ENCODE measurements at regions of chr1 and their contacts with region 1.

Region 1: DNA sequence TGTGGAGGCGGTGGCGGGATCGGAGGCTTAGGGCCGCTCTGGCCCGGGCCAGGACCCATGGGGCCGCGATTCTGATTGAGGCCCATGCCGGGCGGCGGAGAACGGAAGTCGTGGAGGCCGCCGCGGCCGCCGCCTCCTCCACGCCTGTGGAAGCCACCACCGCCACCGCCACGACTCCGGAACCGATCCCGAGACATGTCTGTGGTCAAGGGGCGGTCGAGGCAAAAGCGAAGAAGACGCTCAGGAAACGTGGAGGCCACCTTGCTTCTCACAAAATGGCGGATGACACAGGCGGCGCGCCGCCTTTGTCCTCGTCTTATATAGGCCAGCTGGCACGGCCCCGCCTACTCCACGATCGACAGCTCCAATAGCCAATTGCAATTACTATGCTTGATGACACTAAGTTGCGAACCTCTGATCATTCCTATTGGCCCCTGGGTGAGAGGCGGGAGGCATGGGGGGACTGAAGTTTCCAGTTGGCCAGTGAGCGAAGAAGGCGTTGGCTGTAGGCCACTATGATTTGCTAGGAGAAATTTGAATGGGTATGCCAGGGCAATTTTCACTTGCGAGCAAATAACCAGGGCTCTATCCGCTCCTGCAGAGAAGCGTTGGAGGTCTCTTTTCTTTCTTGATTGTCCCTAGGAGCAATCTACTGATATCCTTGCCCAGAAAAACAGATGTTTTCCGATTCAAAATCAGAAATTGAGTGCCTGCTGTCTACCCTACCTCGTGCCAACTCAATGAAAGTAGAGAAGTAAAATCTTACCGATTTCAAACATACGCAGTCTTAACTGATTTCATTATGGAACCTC is at the start of gene SFPQ:
- DNase-seq: peak; percentile 94 to 99 (median 98)
- ATAC-seq: peak; percentile 94
- H3K4me3 ChIP-seq: peak within 1 kb of the TSS; percentile 72
- H3K4me3 Mint-ChIP-seq: peak within 1 kb of the TSS; percentile 92 to 98 (median 96)
- H3K27ac ChIP-seq: peak within 1 kb of the TSS; percentile 99
- H3K27ac Mint-ChIP-seq: peak within 1 kb of the TSS; percentile 92 to 99 (median 98)
- H3K4me1 ChIP-seq: peaks cover 31 to 32% of the 10 kb centered on the region in 2 donors
- H3K4me1 Mint-ChIP-seq: peaks cover 34 to 52% (median 47%) of the 10 kb centered on the region in 7 donors
- H3K27me3 ChIP-seq: no peaks in the 10 kb centered on the region
- H3K27me3 Mint-ChIP-seq: peaks cover 0 to 5% (median 0%) of the 10 kb centered on the region in 5 donors
- total RNA-seq, gene SFPQ: 316 to 610 (median 356) TPM

Region 2: GRCh38 chr1:34549199-34549598 is 643.9 kb before region 1 on chr1:
- CTCF ChIA-PET with region 1: no interaction called
- POLR2A ChIA-PET with region 1: no interaction called
- intact Hi-C with region 1: no loop called
- DNase-seq: no peak
- ATAC-seq: no peak
- H3K4me3 ChIP-seq: no peak overlapping the region
- H3K4me3 Mint-ChIP-seq: no peak overlapping the region
- H3K27ac ChIP-seq: no peak overlapping the region
- H3K27ac Mint-ChIP-seq: no peak overlapping the region
- H3K4me1 ChIP-seq: no peaks in the 10 kb centered on the region
- H3K4me1 Mint-ChIP-seq: no peaks in the 10 kb centered on the region
- H3K27me3 ChIP-seq: peaks cover 0 to 3% of the 10 kb centered on the region in 2 donors
- H3K27me3 Mint-ChIP-seq: peaks cover 6 to 53% (median 33%) of the 10 kb centered on the region in 5 donors

Region 3: DNA sequence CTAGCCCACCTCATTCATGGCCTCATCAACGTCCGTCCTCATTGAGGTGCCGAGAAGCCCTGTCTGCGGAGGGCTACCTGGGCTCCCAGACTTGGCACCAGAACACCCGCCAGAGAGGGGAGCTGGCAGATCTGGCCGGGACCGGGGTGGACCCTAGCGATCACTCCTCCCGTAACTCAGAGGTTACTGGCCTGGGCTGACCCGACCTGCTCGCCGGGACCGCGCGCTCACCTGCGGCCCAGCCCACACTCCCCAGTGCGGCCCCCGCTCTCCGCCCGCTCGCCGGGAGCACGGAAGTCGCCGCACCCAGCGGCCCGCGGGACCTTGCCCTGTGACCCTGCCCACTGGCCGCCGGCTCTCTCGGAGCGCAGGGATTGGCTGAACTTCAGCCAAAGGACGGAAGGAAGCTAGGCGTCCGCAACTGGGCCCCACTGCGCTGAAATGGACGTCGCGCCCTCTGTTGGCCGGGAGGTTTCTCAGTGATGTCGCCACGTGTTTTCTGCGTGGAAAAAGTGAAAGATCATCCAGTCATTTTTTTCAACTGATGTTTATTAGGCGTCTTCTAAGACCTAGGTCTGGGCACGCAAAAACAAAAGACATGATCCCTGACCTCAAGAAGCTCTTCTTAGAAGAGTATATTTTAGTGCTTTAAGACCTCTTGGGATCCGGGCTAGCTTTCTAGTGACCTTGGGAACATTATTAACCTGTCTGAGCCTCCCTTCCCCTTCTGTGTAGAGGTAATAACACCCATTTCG is 333.4 kb before region 1 on chr1 and contains the start of gene SMIM12:
- CTCF ChIA-PET with region 1: interaction called, 3 read pairs
- POLR2A ChIA-PET with region 1: no interaction called
- intact Hi-C with region 1: loop called (anchors 2 kb)
- DNase-seq: peak; percentile 69 to 92 (median 75)
- ATAC-seq: peak; percentile 99
- H3K4me3 ChIP-seq: peak within 1 kb of the TSS; percentile 72
- H3K4me3 Mint-ChIP-seq: peak within 1 kb of the TSS; percentile 85 to 100 (median 95)
- H3K27ac ChIP-seq: peak within 1 kb of the TSS; percentile 93
- H3K27ac Mint-ChIP-seq: peak within 1 kb of the TSS; percentile 90 to 99 (median 96)
- H3K4me1 ChIP-seq: peaks cover 38 to 43% of the 10 kb centered on the region in 2 donors
- H3K4me1 Mint-ChIP-seq: peaks cover 39 to 66% (median 63%) of the 10 kb centered on the region in 7 donors
- H3K27me3 ChIP-seq: no peaks in the 10 kb centered on the region
- H3K27me3 Mint-ChIP-seq: no peaks in the 10 kb centered on the region
- total RNA-seq, gene SMIM12: 29.1 to 46.4 (median 38.2) TPM

Region 4: DNA sequence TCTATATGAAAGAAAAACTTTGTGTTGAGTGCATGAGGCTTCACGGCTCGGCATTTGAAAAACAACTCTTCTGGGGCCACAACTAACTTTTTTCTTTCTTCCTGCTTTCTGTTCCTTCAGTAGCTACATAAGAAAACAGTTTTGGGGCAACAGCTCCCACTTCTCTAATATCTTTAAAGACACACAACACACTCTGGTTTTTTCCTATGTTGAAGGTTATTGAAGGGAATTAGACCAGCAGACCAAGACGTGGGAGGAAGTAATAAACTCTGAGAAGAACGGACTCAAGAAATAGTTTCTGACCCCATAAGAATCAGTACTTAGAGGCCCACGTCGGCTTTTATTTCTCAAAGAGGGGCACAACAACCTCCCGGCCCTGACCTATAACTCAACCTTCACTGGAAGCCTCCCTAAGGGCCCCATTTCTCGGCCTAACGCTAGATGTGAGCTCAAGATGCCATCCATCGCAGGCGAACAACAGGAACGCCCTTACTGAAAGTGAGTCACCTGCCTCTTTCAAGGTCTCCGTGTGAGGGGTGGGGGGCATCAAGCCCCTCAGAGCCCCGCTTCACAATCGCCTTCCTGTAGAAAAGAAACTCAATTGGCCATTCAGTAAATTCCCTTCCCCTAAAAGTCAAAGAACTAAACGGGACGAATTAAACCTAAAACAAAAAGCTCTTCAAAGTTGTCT is 162.2 kb before region 1 on chr1:
- CTCF ChIA-PET with region 1: no interaction called
- POLR2A ChIA-PET with region 1: interaction called, 7 read pairs
- intact Hi-C with region 1: loop called (anchors 1 kb)
- DNase-seq: peak in 5 of 9 donors; percentile 4 to 42 (median 7)
- ATAC-seq: peak; percentile 36
- H3K4me3 ChIP-seq: peak overlapping the region; percentile 100
- H3K4me3 Mint-ChIP-seq: peak overlapping the region; percentile 87 to 100 (median 98)
- H3K27ac ChIP-seq: peak overlapping the region; percentile 82
- H3K27ac Mint-ChIP-seq: peak overlapping the region; percentile 92 to 99 (median 97)
- H3K4me1 ChIP-seq: peaks cover 15 to 17% of the 10 kb centered on the region in 2 donors
- H3K4me1 Mint-ChIP-seq: peaks cover 24 to 53% (median 43%) of the 10 kb centered on the region in 7 donors
- H3K27me3 ChIP-seq: no peaks in the 10 kb centered on the region
- H3K27me3 Mint-ChIP-seq: peaks cover 0 to 2% (median 0%) of the 10 kb centered on the region in 5 donors

Region 5: DNA sequence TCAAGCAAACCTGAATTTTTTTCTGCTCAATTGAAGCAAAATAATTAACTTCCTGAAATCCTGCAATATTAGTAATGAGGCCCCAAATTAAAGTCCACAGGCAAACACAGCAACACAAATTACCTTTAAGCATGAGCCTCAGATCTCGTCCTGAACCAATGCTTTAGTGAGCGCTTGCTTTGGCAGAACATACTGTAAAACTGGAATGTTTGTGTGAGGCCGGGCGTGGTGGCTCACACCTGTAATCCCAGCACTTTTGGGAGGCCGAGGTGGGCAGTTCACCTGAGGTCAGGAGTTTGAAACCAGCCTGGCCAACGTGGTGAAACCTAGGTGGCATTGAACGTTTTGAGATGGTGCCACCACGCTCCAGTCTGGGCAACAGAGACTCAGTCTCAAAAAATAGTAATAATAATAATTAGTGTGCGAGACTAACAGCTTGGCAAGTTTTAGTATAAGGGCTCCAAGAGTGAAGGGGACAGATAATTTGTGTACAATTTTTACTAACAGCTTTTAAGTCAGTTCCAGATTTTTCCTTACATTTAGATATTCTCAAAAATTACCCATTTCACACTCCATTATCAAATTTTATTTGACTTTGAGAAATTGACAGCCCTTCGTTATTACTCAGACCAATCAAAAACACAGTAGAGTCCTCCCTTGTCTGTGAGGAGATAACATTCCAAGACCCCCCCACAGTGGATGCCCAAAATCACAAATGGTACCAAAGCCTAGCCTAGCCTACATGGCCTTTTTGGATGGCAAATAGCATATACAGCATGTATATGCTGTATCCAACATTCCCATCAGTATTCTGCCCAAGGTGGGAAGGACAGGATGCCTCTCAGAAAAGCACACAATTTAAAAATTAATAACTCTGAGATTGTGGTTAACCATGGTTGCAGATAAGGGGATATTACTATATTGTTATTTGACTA is 17.7 kb before region 1 on chr1:
- CTCF ChIA-PET with region 1: no interaction called
- POLR2A ChIA-PET with region 1: interaction called, 7 read pairs
- intact Hi-C with region 1: loop called in 1 of 2 experiments (anchors 1 kb)
- DNase-seq: no peak
- ATAC-seq: no peak
- H3K4me3 ChIP-seq: no peak overlapping the region
- H3K4me3 Mint-ChIP-seq: no peak overlapping the region
- H3K27ac ChIP-seq: no peak overlapping the region
- H3K27ac Mint-ChIP-seq: peak overlapping the region in 2 of 9 donors; percentile 31 to 74
- H3K4me1 ChIP-seq: peaks cover 6 to 10% of the 10 kb centered on the region in 2 donors
- H3K4me1 Mint-ChIP-seq: peaks cover 6 to 30% (median 24%) of the 10 kb centered on the region in 7 donors
- H3K27me3 ChIP-seq: no peaks in the 10 kb centered on the region
- H3K27me3 Mint-ChIP-seq: no peaks in the 10 kb centered on the region

Region 6: DNA sequence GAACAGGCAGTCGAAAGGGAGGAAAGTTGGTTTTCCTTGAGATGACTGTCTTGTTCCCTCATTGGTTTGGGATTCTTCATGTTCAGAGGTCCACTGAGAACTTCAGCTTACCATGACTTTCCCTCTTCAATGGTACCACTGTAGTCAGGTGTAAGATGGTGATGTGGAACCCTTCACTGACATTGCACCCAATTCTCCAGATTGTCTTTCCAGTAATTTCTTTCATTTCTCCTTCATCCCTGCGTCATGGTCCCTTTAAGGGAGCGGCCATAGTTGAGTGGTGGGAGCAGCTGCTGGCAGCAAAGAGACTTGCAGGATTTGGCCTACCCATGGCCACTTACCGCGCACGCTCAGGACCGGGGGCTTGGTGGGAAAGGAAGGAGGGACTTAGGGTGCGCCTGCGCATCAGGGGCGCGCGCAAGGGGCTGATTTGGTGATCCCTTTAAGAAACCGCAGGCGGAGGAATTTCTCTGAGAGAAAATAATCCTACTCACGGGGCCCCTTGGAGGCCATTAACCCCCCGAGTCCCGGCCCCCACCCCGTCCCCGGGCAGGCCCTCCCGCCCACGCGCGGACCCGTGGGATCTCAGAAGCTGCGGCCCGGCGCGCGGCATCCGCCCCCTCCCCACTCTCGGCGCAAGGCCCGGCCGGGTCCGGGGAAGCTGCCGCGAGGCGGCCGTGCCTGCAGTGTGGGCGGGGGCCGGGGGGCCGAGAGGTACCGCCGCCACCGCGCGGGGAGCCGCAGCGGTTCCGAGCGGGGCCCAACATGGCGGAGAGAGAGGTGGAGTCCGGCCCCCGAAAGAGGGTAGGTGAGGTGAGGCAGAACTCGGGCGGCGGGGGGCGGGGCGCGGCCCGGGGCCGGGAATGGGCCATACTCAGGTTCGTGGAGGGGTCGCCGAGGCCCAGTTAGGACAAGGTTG is 75.5 kb after region 1 on chr1 and contains the start of gene ZMYM4:
- CTCF ChIA-PET with region 1: no interaction called
- POLR2A ChIA-PET with region 1: interaction called, 5 read pairs
- intact Hi-C with region 1: loop called (anchors 1 kb)
- DNase-seq: peak; percentile 67 to 91 (median 87)
- ATAC-seq: peak; percentile 96
- H3K4me3 ChIP-seq: peak within 1 kb of the TSS; percentile 58
- H3K4me3 Mint-ChIP-seq: peak within 1 kb of the TSS; percentile 78 to 98 (median 90)
- H3K27ac ChIP-seq: peak within 1 kb of the TSS; percentile 88
- H3K27ac Mint-ChIP-seq: peak within 1 kb of the TSS; percentile 80 to 99 (median 93)
- H3K4me1 ChIP-seq: peaks cover 6 to 20% of the 10 kb centered on the region in 2 donors
- H3K4me1 Mint-ChIP-seq: peaks cover 22 to 44% (median 40%) of the 10 kb centered on the region in 7 donors
- H3K27me3 ChIP-seq: no peaks in the 10 kb centered on the region
- H3K27me3 Mint-ChIP-seq: peaks cover 0 to 5% (median 0%) of the 10 kb centered on the region in 5 donors
- total RNA-seq, gene ZMYM4: 32.1 to 52.9 (median 45.6) TPM

Region 7: DNA sequence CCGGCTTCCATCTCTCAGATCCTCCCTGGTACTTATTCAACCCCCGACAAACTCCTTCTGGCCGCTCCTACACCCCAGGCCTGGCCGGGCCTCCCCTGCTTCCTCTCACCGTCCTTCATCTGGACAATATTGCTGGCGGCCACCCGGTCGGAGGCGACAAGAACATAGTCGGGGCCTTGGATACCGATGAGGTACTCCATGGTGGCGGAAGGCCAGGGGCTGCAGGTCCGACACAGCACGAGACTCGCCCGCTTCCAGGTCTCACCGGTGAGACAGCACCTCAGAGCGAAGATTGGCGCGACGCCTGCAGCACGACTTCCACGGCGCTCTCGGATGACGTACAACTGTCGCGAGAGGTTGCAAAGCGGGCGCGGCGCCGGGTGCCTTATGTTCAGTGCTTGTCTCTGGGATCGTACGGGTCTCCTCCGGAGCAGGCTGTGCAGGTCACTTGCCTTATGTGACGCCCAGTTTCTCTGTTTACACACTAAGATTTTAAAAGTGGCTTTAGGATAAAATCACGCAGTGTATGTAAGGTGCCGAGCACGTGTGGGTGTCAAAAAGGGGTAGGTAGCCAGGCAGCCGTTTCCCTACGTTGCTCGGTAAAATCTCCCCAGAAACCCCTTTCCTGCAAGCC is 448.3 kb after region 1 on chr1 and contains the start of gene PSMB2:
- CTCF ChIA-PET with region 1: no interaction called
- POLR2A ChIA-PET with region 1: no interaction called
- intact Hi-C with region 1: loop called in 1 of 2 experiments (anchors 5 kb)
- DNase-seq: peak; percentile 89 to 96 (median 95)
- ATAC-seq: peak; percentile 97
- H3K4me3 ChIP-seq: peak within 1 kb of the TSS; percentile 89
- H3K4me3 Mint-ChIP-seq: peak within 1 kb of the TSS; percentile 97 to 100 (median 100)
- H3K27ac ChIP-seq: peak within 1 kb of the TSS; percentile 92
- H3K27ac Mint-ChIP-seq: peak within 1 kb of the TSS; percentile 98 to 100 (median 99)
- H3K4me1 ChIP-seq: peaks cover 18 to 19% of the 10 kb centered on the region in 2 donors
- H3K4me1 Mint-ChIP-seq: peaks cover 16 to 54% (median 42%) of the 10 kb centered on the region in 7 donors
- H3K27me3 ChIP-seq: no peaks in the 10 kb centered on the region
- H3K27me3 Mint-ChIP-seq: peaks cover 12 to 44% (median 30%) of the 10 kb centered on the region in 5 donors
- total RNA-seq, gene PSMB2: 20.4 to 93.5 (median 23.5) TPM

Region 8: GRCh38 chr1:35769759-35770446 is 576.8 kb after region 1 on chr1 and contains the start of gene CLSPN:
- CTCF ChIA-PET with region 1: no interaction called
- POLR2A ChIA-PET with region 1: interaction called, 3 read pairs
- intact Hi-C with region 1: loop called (anchors 1 to 2 kb)
- DNase-seq: peak; percentile 75 to 95 (median 88)
- ATAC-seq: peak; percentile 97
- H3K4me3 ChIP-seq: peak within 1 kb of the TSS; percentile 87
- H3K4me3 Mint-ChIP-seq: peak within 1 kb of the TSS; percentile 97 to 100 (median 99)
- H3K27ac ChIP-seq: peak within 1 kb of the TSS; percentile 88
- H3K27ac Mint-ChIP-seq: peak within 1 kb of the TSS; percentile 73 to 96 (median 94)
- H3K4me1 ChIP-seq: no peaks in the 10 kb centered on the region
- H3K4me1 Mint-ChIP-seq: peaks cover 0 to 29% (median 11%) of the 10 kb centered on the region in 7 donors
- H3K27me3 ChIP-seq: no peaks in the 10 kb centered on the region
- H3K27me3 Mint-ChIP-seq: no peaks in the 10 kb centered on the region
- total RNA-seq, gene CLSPN: 0.11 to 48.7 (median 0.64) TPM

Measured in naive thymus-derived CD4-positive, alpha-beta T cell (primary cell).